ENCODE measurements at regions of chr1 and their contacts with region 1.

Region 1: DNA sequence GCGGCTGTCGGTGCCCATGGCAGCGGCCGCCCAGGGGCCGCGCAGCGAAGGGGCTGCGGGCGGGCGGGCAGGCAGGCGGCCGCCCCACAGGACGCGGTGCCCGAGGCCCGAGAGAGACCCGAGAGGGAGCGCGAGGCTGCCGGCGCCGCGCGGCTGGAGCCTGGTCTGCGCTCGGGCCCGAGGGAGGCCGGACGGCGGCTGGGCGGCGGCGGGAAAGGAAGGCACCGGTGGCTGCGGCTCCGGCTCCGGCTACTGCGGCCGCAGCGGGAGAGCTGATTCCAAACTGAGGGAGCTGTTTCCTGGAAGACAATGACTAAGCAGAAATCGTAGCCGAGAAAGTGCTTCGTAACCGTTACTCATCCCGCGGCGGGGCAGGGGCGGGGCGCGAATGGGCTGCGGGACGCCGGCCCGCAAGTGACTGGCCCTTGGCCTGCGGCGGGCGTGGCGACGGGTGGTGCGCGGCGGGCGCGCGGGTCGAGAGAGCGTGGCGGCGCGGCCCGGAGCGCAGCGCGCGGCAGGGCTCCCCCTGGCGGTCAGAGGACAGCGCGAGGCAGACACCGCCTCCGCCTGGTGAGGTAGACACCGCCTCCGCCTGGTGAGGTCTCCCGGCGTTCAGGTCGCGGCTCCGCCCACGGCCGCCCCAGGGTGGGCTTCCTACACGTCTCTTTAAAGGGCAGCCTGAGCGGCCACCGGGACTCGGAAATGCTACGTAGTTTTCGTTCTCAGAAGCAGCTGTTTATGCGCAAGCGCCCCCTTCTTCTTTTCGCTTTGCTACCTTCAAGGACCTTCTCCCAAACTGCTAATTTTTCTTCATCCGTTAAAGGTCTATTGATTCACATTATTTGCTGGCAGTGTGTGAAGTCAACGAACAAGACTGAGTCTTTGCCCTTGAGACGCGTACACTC is at the start of gene GCLM:
- DNase-seq: peak; percentile 96 to 97
- ATAC-seq: peak; percentile 98 to 99 (median 98)
- H3K4me3 ChIP-seq: peak within 1 kb of the TSS; percentile 83
- H3K27ac ChIP-seq: peak within 1 kb of the TSS; percentile 82
- H3K4me1 ChIP-seq: peaks cover 32% of the 10 kb centered on the region
- H3K27me3 ChIP-seq: no peaks in the 10 kb centered on the region
- CTCF ChIP-seq: peak; percentile 98
- total RNA-seq, gene GCLM: 38.9 to 54.7 (median 42.4) TPM

Region 2: DNA sequence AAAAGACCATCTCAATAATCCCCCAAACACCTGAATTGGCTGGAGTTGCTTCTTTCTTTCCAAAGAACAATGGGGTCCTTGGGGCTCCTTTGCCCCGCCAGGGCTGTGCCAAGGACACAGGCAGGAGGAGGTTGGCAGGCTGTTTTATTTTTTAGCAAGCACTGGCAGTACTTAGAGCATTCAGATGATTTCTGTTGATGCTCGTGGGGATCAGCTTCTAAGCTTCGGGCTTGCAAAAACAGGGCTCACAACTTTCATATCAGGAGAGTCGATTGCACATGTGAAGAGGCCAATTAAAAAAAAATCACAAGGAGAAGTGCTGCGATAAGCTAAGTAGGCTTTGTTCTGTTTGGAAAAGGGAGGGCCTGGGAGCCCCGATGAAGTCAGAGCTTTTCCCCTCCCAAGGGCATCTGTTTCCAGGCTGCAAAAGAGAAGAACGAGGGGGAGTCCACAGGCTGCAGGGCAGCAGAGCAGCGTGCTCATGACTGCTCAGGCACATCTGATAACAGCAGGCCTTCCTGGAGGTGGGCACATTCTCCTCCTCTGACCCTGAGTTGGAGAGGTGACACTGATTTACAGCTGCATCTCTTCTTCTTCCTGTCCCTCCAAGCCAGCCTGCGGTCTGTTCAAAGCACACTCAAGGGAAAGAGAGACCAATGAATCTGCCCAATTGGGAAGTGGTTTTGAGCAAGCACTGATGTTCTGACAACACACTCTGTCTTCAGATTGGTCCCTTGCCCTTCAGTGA is 200.5 kb before region 1 on chr1:
- intact Hi-C with region 1: no loop called
- DNase-seq: no peak
- ATAC-seq: peak in 3 of 4 donors; percentile 19 to 31 (median 24)
- H3K4me3 ChIP-seq: no peak overlapping the region
- H3K27ac ChIP-seq: no peak overlapping the region
- H3K4me1 ChIP-seq: peaks cover 6% of the 10 kb centered on the region
- H3K27me3 ChIP-seq: no peaks in the 10 kb centered on the region
- CTCF ChIP-seq: no peak

Region 3: DNA sequence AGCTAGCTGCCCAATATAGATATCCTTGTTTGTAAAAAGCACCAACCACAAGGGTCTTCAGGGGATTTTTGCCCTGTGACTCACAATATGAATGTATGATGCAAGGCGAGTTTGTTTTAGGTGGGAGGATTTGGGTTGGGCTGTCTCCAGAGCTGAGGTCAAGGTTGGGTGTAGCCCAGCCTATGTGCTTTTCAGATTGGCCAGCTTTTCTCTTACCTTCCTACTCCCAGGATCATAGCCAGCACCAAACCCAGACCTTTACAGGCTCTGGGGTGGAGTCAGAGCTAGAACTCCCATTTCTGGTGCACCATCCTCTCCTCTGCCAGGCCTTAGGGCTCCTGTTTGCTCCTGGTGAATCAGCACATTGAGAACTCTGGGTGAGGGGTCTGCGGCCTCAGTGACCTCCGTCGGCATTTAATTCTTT is 55.4 kb after region 1 on chr1:
- intact Hi-C with region 1: loop called in 1 of 2 experiments (anchors 5 kb)
- DNase-seq: no peak
- ATAC-seq: no peak
- H3K4me3 ChIP-seq: no peak overlapping the region
- H3K27ac ChIP-seq: no peak overlapping the region
- H3K4me1 ChIP-seq: peaks cover 32% of the 10 kb centered on the region
- H3K27me3 ChIP-seq: no peaks in the 10 kb centered on the region
- CTCF ChIP-seq: no peak

Measured in psoas muscle (tissue), 8 donors.